OCI-LY7 (cell line): ENCODE measurements at regions of chr5 and their contacts with region 1.

Region 1: GRCh38 chr5:141618804-141619554 is at the start of gene DIAPH1:
- DNase-seq: peak; percentile 98
- H3K4me3 ChIP-seq: peak within 1 kb of the TSS; percentile 98
- H3K27ac ChIP-seq: peak within 1 kb of the TSS; percentile 63
- H3K4me1 ChIP-seq: peaks cover 54% of the 10 kb centered on the region
- CTCF ChIP-seq: peak; percentile 97
- total RNA-seq, gene DIAPH1: 64.9 and 78.8 TPM in 2 replicates

Region 2: DNA sequence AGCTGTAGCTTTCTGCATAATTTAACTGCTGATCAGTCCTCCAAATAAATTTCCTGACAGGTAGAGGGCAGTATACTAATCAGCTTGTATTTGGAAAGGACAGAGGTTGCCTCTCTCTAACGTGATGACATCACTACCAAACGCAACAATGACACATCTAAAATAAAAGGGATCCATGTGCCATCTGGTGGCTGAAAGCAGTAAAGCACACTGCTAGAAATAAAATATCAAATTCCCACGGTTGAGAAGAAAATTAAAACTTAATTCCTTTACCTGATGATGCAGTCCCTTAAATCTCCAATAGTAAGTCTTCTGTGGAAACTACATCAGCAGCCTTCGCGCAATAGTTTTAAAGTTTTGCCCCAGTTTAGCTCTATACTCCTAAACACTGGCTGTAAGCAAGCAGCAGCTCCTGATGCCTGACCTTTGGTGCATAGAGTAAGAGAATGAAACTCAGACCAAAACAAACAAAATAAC is 54.7 kb before region 1 on chr5:
- CTCF ChIA-PET with region 1: interaction called, 4 read pairs
- POLR2A ChIA-PET with region 1: interaction called, 3 read pairs
- intact Hi-C with region 1: loop called (anchors 5 kb)
- DNase-seq: peak; percentile 97
- H3K4me3 ChIP-seq: no peak overlapping the region
- H3K27ac ChIP-seq: peak overlapping the region; percentile 54
- H3K4me1 ChIP-seq: peaks cover 8% of the 10 kb centered on the region
- CTCF ChIP-seq: peak; percentile 100

Region 3: DNA sequence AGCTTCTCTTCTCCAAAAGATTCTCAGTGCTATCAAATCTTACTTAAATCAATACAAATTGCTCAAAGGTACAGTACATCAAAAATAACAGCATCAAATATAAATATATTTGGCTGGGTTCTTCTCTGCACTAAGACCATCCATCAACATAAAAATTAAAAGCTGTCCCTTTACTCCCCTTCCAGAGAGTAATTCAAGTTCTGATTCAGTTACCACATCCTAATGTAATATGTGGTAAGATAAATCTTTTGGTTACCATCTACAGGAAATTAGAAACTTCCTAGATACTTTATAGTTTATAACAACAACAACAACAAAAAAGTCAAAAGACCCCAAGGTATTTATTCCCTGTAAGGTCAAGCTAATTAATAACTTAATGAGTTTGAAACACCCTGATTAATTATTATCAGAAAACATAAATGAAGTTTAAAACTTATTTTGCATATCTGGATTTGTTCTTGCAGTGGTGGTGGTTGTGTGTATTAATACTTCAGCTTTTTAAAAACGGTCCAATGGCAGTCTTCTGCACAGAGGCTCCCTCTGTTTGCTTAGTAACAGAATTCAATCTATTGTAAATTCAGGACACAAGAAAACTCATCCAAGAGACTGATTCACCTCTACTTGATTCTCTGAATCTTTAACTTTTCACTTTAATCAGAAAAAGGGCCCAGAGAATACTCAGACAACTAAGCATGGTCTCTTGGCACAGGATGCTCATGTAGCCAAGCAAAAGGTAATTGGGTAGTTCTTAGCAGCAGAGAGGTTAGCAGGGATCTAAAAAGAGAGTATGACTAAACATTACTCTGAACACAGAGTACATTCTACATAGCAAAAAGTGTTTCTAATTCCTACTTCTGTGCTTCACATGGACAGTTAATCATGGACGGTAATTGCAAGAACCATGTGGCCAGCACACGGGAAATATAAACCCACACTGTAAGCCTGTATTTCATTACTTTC is 20.3 kb before region 1 on chr5:
- CTCF ChIA-PET with region 1: interaction called, 24 read pairs
- POLR2A ChIA-PET with region 1: interaction called, 50 read pairs
- intact Hi-C with region 1: no loop called
- DNase-seq: no peak
- H3K4me3 ChIP-seq: no peak overlapping the region
- H3K27ac ChIP-seq: no peak overlapping the region
- H3K4me1 ChIP-seq: peaks cover 22% of the 10 kb centered on the region
- CTCF ChIP-seq: no peak

Region 4: GRCh38 chr5:141605523-141606277 is 13.3 kb before region 1 on chr5:
- CTCF ChIA-PET with region 1: interaction called, 3 read pairs
- POLR2A ChIA-PET with region 1: interaction called, 43 read pairs
- intact Hi-C with region 1: no loop called
- DNase-seq: peak; percentile 84
- H3K4me3 ChIP-seq: peak overlapping the region; percentile 39
- H3K27ac ChIP-seq: peak overlapping the region; percentile 72
- H3K4me1 ChIP-seq: peaks cover 43% of the 10 kb centered on the region
- CTCF ChIP-seq: no peak

Region 5: GRCh38 chr5:141636413-141637122 is 17.6 kb after region 1 on chr5 and contains the starts of genes HDAC3 and RELL2:
- CTCF ChIA-PET with region 1: interaction called, 11 read pairs
- POLR2A ChIA-PET with region 1: interaction called, 101 read pairs
- intact Hi-C with region 1: loop called (anchors 1 kb)
- DNase-seq: peak; percentile 92
- H3K4me3 ChIP-seq: peak within 1 kb of the TSS; percentile 98
- H3K27ac ChIP-seq: peak within 1 kb of the TSS; percentile 59
- H3K4me1 ChIP-seq: peaks cover 34% of the 10 kb centered on the region
- CTCF ChIP-seq: no peak
- total RNA-seq, gene HDAC3: 78.8 and 85.4 TPM in 2 replicates
- total RNA-seq, gene RELL2: 28.0 and 29.8 TPM in 2 replicates

Region 6: GRCh38 chr5:141762790-141763368 is 143.9 kb after region 1 on chr5:
- CTCF ChIA-PET with region 1: no interaction called
- POLR2A ChIA-PET with region 1: no interaction called
- intact Hi-C with region 1: no loop called
- DNase-seq: no peak
- H3K4me3 ChIP-seq: no peak overlapping the region
- H3K27ac ChIP-seq: no peak overlapping the region
- H3K4me1 ChIP-seq: no peaks in the 10 kb centered on the region
- CTCF ChIP-seq: no peak; the same call in 1 of the 2 replicates

Region 7: DNA sequence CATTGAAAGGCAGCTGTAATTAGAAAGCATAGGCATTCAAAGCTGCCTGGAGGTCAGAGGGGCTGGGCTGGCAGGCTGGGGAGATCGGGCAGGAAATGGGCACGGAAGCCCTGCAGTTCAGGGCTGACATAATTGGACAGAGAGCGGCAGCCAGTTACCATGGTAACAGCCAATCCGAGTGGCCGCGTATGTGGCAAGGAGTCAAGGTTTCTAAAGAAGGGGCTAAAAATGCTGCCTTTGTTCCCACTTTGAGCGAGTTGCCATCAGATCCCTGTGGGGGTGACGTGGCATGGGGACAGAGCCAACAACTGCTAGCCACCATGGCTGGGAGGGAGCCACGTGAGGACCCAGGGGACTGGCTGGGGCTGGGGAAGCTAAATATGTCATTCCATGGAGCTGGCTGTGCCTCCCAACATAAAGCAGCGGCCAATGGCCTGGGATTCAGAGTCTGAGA is 444.9 kb after region 1 on chr5:
- CTCF ChIA-PET with region 1: no interaction called
- POLR2A ChIA-PET with region 1: no interaction called
- intact Hi-C with region 1: no loop called
- DNase-seq: no peak
- H3K4me3 ChIP-seq: no peak overlapping the region
- H3K27ac ChIP-seq: no peak overlapping the region
- H3K4me1 ChIP-seq: no peaks in the 10 kb centered on the region
- CTCF ChIP-seq: no peak